Left lung (tissue), 14 donors: ENCODE measurements at regions of chr11 and their contacts with region 1.

Region 1: GRCh38 chr11:10623797-10624761 is 55.6 kb upstream of the LYVE1 start:
- DNase-seq: peak in 3 of 4 donors; percentile 50 to 82 (median 65)
- ATAC-seq: peak; percentile 88
- H3K4me3 ChIP-seq: no peak overlapping the region
- H3K27ac ChIP-seq: peak overlapping the region; percentile 54 to 94
- H3K4me1 ChIP-seq: peaks cover 5 to 34% of the 10 kb centered on the region in 2 donors
- H3K27me3 ChIP-seq: no peaks in the 10 kb centered on the region
- CTCF ChIP-seq: peak; percentile 31 to 32

Region 2: GRCh38 chr11:10514210-10514609 is 109.9 kb before region 1 on chr11:
- intact Hi-C with region 1: no loop called
- DNase-seq: no peak
- ATAC-seq: no peak
- H3K4me3 ChIP-seq: no peak overlapping the region
- H3K27ac ChIP-seq: no peak overlapping the region
- H3K4me1 ChIP-seq: peaks cover 0 to 12% of the 10 kb centered on the region in 2 donors
- H3K27me3 ChIP-seq: no peaks in the 10 kb centered on the region
- CTCF ChIP-seq: peak in 1 of 2 donors; percentile 27

Region 3: GRCh38 chr11:10735481-10736475 is 111.7 kb after region 1 on chr11:
- intact Hi-C with region 1: loop called in 1 of 2 experiments (anchors 10 kb)
- DNase-seq: peak; percentile 92 to 99 (median 96)
- ATAC-seq: peak; percentile 100
- H3K4me3 ChIP-seq: peak overlapping the region in 1 of 2 donors; percentile 13
- H3K27ac ChIP-seq: peak overlapping the region; percentile 46 to 60
- H3K4me1 ChIP-seq: peaks cover 13 to 16% of the 10 kb centered on the region in 2 donors
- H3K27me3 ChIP-seq: no peaks in the 10 kb centered on the region
- CTCF ChIP-seq: peak; percentile 96 to 97